HEK293 (cell line): ENCODE measurements at regions of chr7 and their contacts with region 1.

Region 1: DNA sequence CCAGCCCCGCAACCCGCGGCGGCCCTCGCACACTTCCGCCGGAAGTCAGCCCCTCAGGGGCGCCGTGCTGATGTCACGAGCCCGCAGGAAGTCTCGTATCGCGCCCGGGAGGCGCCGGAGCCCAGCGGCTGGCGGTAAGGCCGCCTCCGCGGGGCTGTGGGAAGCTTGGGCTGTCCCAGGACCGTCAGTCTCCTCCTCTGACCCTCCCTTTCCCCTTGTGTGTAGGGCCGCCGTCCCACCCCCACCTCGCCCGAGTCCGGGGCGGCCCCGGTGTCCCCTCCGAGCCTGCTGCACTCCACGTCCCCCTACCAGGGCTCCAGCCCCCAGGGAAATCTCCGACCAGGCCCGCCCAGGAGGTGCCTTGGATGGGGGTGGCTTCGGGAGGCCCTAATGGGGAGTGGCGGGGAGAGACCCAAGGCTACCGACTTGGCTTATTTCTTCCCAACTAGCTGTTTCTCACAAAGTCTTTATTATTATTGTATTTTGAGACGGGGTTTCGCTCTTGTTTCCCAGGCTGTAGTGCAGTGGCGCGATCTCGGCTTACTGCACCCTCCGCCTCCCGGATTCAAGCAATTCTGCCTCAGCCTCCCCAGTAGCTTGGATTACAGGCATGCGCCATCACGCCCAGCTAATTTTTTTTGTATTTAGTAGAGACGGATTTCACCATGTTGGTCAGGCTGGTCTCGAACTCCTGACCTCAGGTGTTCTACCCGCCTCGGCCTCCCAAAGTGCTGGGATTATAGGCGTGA is at the start of gene ZDHHC4:
- H3K4me3 ChIP-seq: peak within 1 kb of the TSS; percentile 82
- H3K27ac ChIP-seq: peak within 1 kb of the TSS; percentile 93
- H3K4me1 ChIP-seq: no peaks in the 10 kb centered on the region; the same call in 1 of the 2 replicates
- CTCF ChIP-seq: no peak

Region 2: DNA sequence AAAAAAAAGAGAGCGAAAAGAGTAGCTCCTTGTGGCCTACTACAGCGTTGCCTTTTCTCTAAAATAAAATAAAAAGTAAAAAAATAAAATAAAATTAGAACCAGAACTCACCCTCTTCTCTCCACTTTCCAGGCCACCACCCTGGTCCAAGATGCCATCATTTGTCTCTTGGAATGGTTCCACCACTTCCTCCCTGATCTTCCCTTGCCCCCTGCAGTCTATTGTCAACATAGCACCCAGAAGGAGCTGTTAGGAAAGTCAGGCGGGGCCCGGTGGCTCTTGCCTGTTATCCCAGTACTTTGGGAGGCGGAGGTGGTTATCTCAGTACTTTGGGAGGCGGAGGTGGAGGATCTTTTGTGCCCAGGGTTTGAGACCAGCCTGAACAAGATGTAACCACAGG is 18.7 kb before region 1 on chr7:
- CTCF ChIA-PET with region 1: interaction called, 19 read pairs
- POLR2A ChIA-PET with region 1: no interaction called
- H3K4me3 ChIP-seq: no peak overlapping the region
- H3K27ac ChIP-seq: no peak overlapping the region
- H3K4me1 ChIP-seq: no peaks in the 10 kb centered on the region
- CTCF ChIP-seq: no peak

Region 3: GRCh38 chr7:6589829-6590644 is 12.5 kb after region 1 on chr7 and contains the start of gene INTS15:
- CTCF ChIA-PET with region 1: interaction called, 12 read pairs
- POLR2A ChIA-PET with region 1: interaction called, 3 read pairs
- H3K4me3 ChIP-seq: peak within 1 kb of the TSS; percentile 88
- H3K27ac ChIP-seq: peak within 1 kb of the TSS; percentile 89
- H3K4me1 ChIP-seq: no peaks in the 10 kb centered on the region
- CTCF ChIP-seq: peak; percentile 53